HCT116 (cell line): ENCODE measurements at regions of chr4 and their contacts with region 1.

Region 1: DNA sequence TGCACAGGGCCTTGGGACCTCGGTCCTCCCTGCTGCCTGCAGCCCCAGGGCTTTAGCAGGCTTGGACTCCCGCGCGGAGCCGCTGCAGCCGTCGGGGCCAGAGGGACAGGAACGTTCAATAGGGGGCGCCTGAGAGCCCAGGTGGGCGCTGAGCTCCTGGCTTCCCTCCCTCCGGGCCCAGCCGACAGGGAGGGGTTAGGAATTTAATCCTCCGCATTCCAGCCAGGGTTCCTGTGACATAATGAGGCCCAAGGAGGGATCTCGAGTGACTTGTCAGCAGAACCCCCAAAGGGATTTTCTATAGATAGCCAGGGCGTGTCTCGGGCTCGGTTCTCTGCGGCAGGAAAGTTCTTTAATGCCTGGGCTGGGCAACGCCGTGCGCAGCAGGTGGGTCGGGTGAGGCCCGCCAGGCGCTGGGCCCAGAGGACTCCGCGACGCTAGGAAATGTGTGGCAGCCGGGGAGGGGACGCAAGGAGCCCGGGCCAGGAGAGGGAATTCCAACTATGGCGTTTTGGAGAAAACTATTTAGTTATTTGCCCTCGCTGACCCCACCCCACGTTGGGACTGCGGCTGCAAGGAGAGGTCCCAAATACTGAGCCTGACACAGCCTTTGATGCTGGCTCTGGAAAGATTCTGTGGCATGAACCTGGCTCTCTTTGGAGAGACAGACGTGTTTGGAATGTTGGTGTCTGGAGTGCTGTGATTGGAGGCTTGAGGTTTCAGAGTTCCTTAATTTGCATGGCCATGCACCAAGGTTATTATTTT is 285.2 kb upstream of the GATB start:
- DNase-seq: peak; percentile 59
- ATAC-seq: peak; percentile 95
- H3K4me3 ChIP-seq: peak overlapping the region; percentile 34 to 49
- H3K27ac ChIP-seq: no peak overlapping the region
- H3K4me1 ChIP-seq: peaks cover 3 to 16% of the 10 kb centered on the region in 2 experiments; a peak in 3 of 4 replicates
- H3K27me3 ChIP-seq: no peaks in the 10 kb centered on the region
- CTCF ChIP-seq: peak; percentile 66 to 88 (median 86)
- POLR2A ChIP-seq: no peak
- RAD21 ChIP-seq: peak; percentile 76

Region 2: DNA sequence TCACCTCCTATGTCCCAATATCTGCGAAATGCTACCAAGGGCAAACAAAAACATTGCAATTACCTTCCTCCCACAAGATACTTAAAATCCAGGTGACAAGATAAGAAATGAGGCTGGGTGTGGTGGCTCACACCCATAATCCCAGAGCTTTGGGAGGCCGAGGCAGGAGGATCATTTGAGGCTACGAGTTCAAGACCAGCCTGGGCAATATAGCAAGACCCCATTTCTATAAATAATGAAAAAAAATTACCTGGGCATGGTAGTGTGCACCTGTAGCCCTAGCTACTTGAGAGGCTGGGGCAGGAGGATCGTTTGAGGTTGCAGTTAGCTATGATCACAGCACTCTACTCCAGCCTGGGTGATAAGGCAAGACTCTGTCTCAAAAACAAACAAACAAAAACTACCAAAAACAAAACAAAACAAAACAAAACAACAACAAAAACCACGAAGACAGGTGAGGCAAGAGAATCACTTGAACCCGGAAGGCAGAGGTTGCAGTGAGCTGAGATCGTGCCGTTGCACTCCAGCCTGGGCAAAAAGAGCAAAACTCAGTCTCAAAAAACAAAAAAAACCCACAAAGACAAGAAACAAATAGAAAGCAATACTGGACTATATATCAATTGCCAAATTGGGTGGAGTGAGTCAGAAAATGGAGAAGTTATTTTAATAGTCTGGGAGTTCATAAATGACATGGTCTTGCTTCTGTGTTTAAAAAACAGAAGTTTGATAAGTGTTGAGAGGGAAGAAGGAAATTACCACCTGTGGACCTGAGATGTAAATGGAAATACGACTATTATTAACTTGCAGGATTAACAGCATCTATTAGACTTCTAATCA is 313.4 kb after region 1 on chr4:
- CTCF ChIA-PET with region 1: no interaction called
- POLR2A ChIA-PET with region 1: no interaction called
- RAD21 ChIA-PET with region 1: no interaction called
- intact Hi-C with region 1: loop called (anchors 1 kb)
- DNase-seq: no peak
- ATAC-seq: no peak
- H3K4me3 ChIP-seq: no peak overlapping the region
- H3K27ac ChIP-seq: no peak overlapping the region
- H3K4me1 ChIP-seq: peaks cover 0 to 28% of the 10 kb centered on the region in 2 experiments; a peak in 2 of 4 replicates
- H3K27me3 ChIP-seq: no peaks in the 10 kb centered on the region
- CTCF ChIP-seq: no peak
- POLR2A ChIP-seq: no peak
- RAD21 ChIP-seq: no peak